Ovary (tissue), 10 donors: ENCODE measurements at regions of chr14 and their contacts with region 1.

Region 1: GRCh38 chr14:92106143-92106926 is at the start of gene ATXN3:
- DNase-seq: peak; percentile 94 to 98 (median 97)
- H3K4me3 ChIP-seq: peak within 1 kb of the TSS; percentile 94
- H3K27ac ChIP-seq: peak within 1 kb of the TSS; percentile 95 to 97
- H3K4me1 ChIP-seq: peaks cover 17% of the 10 kb centered on the region
- H3K27me3 ChIP-seq: no peaks in the 10 kb centered on the region
- CTCF ChIP-seq: peak; percentile 59 to 81 (median 78)
- EP300 ChIP-seq: no peak
- POLR2A ChIP-seq: peak; percentile 50
- total RNA-seq, gene ATXN3: 24.8 to 35.8 (median 30.5) TPM

Region 2: DNA sequence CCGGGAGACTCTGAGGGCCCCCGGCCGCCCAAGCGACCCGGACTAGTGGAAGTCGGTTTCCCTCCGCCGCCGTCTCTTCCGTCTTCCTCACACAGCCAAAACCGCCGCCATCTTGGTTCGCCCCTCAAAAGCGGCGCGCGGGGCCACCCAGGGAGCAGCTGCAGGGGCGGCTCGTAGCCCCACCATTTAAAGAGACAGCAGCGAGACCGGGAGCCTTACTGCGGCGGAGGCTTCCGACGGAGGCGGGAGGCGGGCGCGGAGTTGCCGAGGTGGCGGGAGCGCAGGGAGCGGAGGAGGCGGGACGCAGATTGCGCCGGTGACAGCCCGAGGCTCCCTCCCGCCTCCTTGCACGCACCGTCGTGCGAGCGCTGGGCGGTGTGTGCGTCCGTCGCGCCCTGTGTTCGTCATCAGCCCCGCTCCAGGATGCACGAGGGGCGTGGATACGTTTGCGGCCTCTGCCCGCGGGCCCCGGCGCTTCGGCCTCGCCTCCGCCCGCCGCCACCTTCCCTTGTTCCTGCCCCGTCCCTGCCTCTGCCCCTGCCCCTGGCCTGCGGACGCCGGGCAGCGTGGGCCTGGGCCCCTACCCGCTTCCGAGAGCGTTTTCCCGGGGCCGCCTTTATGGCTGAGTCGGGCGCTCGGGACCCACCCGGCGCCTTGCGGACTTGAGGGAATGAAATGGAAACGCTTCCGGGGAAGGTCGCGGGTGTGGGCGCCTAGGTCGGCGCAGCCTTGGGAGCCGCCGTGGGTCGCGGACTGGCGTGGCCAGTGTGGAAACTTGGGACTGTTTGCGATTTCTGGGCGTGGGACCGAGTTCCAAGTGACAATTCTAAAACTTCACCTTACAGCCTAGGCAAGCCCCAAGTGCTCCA is 595.9 kb before region 1 on chr14 and contains the start of gene PPP4R3A:
- intact Hi-C with region 1: loop called in 1 of 4 experiments (anchors 10 kb)
- DNase-seq: peak; percentile 89 to 95 (median 93)
- H3K4me3 ChIP-seq: peak within 1 kb of the TSS; percentile 86
- H3K27ac ChIP-seq: peak within 1 kb of the TSS; percentile 94 to 97
- H3K4me1 ChIP-seq: peaks cover 7% of the 10 kb centered on the region
- H3K27me3 ChIP-seq: no peaks in the 10 kb centered on the region
- CTCF ChIP-seq: no peak
- EP300 ChIP-seq: peak; percentile 12
- POLR2A ChIP-seq: peak; percentile 74
- total RNA-seq, gene PPP4R3A: 59.5 to 86.3 (median 74.7) TPM